Body of pancreas (tissue), 4 donors: ENCODE measurements at regions of chr4 and their contacts with region 1.

Region 1: GRCh38 chr4:98995183-98996055 is at the start of gene METAP1:
- DNase-seq: peak; percentile 93 to 95 (median 94)
- ATAC-seq: peak; percentile 92
- H3K4me3 ChIP-seq: peak within 1 kb of the TSS; percentile 83 to 93
- H3K27ac ChIP-seq: peak within 1 kb of the TSS; percentile 81 to 93 (median 88)
- H3K4me1 ChIP-seq: peaks cover 18% of the 10 kb centered on the region
- H3K27me3 ChIP-seq: no peaks in the 10 kb centered on the region
- CTCF ChIP-seq: peak in 6 of 7 experiments; percentile 16 to 78 (median 54)
- POLR2A ChIP-seq: peak; percentile 45 to 87 (median 86)
- total RNA-seq, gene METAP1: 21.1 to 21.8 TPM

Region 2: GRCh38 chr4:99054428-99054994 is 59.1 kb after region 1 on chr4:
- intact Hi-C with region 1: loop called (anchors 10 kb)
- DNase-seq: no peak
- ATAC-seq: no peak
- H3K4me3 ChIP-seq: no peak overlapping the region
- H3K27ac ChIP-seq: no peak overlapping the region
- H3K4me1 ChIP-seq: peaks cover 3% of the 10 kb centered on the region
- H3K27me3 ChIP-seq: no peaks in the 10 kb centered on the region
- CTCF ChIP-seq: no peak
- POLR2A ChIP-seq: no peak